Activated T-helper 1 cell treated with anti-CD3 and anti-CD28 coated beads, Interleukin-12 subunit alpha, Interleukin-12 subunit beta, Interleukin-2, Interleukin-4 antibody, amounts not matched to agents 30 ng/mL and 10 ng/mL and 1 ng/mL, durations not matched to agents 14 hours and 24 hours and 36 hours (primary cell): ENCODE measurements at regions of chr1 and their contacts with region 1.

Region 1: DNA sequence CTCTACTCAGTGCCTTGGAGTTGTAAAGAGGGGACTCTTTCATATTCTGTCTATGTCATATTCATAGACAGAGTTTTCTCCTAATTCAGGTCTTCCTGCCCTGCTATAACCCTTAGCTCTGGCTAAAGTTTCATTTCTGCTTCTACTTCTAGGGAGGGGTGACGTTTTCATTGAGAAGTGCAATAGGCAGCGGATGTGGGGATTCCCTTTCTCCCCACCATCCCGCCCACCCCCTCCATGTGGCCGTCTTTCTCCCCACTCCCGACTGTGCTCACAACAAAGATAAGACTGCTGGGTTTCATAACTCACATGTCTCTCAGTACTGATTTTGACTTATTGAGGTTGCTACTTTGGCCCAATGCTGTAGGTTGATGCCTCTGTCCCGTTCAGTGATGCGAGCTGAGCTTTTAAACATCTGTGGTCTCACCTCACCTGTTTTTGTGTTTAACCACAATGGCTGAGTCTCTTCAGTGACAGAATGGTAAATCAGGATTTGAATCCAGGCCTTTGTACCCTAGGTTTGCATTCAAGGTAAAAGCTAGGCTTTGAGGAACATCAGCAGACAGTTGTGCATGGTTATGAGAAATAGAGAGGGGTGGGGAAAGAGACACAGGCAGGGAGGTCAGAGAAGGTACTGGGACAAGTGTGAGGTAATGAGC is 7.8 kb upstream of the KIF14 start:
- DNase-seq: no peak
- H3K4me3 Mint-ChIP-seq: peak overlapping the region; percentile 32
- H3K27ac Mint-ChIP-seq: peak overlapping the region; percentile 42
- H3K4me1 Mint-ChIP-seq: peaks cover 45% of the 10 kb centered on the region
- H3K27me3 Mint-ChIP-seq: no peaks in the 10 kb centered on the region

Region 2: GRCh38 chr1:200526709-200527612 is 101.4 kb before region 1 on chr1:
- intact Hi-C with region 1: no loop called
- DNase-seq: no peak
- H3K4me3 Mint-ChIP-seq: no peak overlapping the region
- H3K27ac Mint-ChIP-seq: no peak overlapping the region
- H3K4me1 Mint-ChIP-seq: peaks cover 11% of the 10 kb centered on the region
- H3K27me3 Mint-ChIP-seq: peaks cover 2% of the 10 kb centered on the region

Region 3: GRCh38 chr1:200639790-200640669 is 11.7 kb after region 1 on chr1:
- intact Hi-C with region 1: loop called (anchors 1 kb)
- DNase-seq: no peak
- H3K4me3 Mint-ChIP-seq: no peak overlapping the region
- H3K27ac Mint-ChIP-seq: peak overlapping the region; percentile 16
- H3K4me1 Mint-ChIP-seq: peaks cover 9% of the 10 kb centered on the region
- H3K27me3 Mint-ChIP-seq: no peaks in the 10 kb centered on the region

Region 4: GRCh38 chr1:200669314-200670241 is 41.2 kb after region 1 on chr1 and contains the start of gene DDX59:
- intact Hi-C with region 1: loop called (anchors 1 kb)
- DNase-seq: peak; percentile 89
- H3K4me3 Mint-ChIP-seq: peak within 1 kb of the TSS; percentile 99
- H3K27ac Mint-ChIP-seq: peak within 1 kb of the TSS; percentile 99
- H3K4me1 Mint-ChIP-seq: peaks cover 49% of the 10 kb centered on the region
- H3K27me3 Mint-ChIP-seq: peaks cover 3% of the 10 kb centered on the region
- total RNA-seq, gene DDX59: 13.8 and 14.4 TPM in 2 replicates

Region 5: GRCh38 chr1:200708769-200709168 is 80.4 kb after region 1 on chr1:
- intact Hi-C with region 1: no loop called
- DNase-seq: no peak
- H3K4me3 Mint-ChIP-seq: no peak overlapping the region
- H3K27ac Mint-ChIP-seq: no peak overlapping the region
- H3K4me1 Mint-ChIP-seq: no peaks in the 10 kb centered on the region
- H3K27me3 Mint-ChIP-seq: peaks cover 3% of the 10 kb centered on the region

Region 6: DNA sequence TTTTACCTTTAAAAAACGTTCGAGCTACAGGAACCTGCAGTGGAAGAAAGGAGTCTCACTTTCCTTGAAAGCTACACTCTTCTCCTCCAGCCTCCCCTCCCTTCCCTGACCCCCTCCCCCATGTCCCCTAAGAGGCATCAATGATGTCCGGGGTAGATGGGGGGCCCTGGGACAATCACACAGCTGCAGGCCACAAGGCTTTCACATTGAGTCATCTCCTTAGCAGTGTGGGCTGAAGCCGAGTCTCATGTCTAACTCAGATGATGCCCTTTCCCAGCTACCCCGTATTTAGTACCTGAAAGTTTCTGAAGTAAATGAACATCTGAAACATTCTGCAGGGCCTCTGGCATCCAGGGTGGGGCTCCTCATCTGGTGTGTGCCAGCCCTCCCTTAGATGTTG is 238.2 kb after region 1 on chr1:
- intact Hi-C with region 1: loop called (anchors 1 kb)
- DNase-seq: no peak
- H3K4me3 Mint-ChIP-seq: no peak overlapping the region
- H3K27ac Mint-ChIP-seq: no peak overlapping the region
- H3K4me1 Mint-ChIP-seq: peaks cover 41% of the 10 kb centered on the region
- H3K27me3 Mint-ChIP-seq: peaks cover 37% of the 10 kb centered on the region

Region 7: GRCh38 chr1:200907611-200908097 is 279.3 kb after region 1 on chr1:
- intact Hi-C with region 1: loop called (anchors 5 kb)
- DNase-seq: no peak
- H3K4me3 Mint-ChIP-seq: no peak overlapping the region
- H3K27ac Mint-ChIP-seq: no peak overlapping the region
- H3K4me1 Mint-ChIP-seq: peaks cover 10% of the 10 kb centered on the region
- H3K27me3 Mint-ChIP-seq: peaks cover 29% of the 10 kb centered on the region

Region 8: GRCh38 chr1:201828820-201829774 is 1200.7 kb after region 1 on chr1 and contains the start of gene IPO9:
- intact Hi-C with region 1: no loop called
- DNase-seq: peak; percentile 93
- H3K4me3 Mint-ChIP-seq: peak within 1 kb of the TSS; percentile 96
- H3K27ac Mint-ChIP-seq: peak within 1 kb of the TSS; percentile 88
- H3K4me1 Mint-ChIP-seq: peaks cover 43% of the 10 kb centered on the region
- H3K27me3 Mint-ChIP-seq: peaks cover 3% of the 10 kb centered on the region
- total RNA-seq, gene IPO9: 58.5 and 61.6 TPM in 2 replicates